Mammary epithelial cell (primary cell): ENCODE measurements at regions of chr16 and their contacts with region 1.

Region 1: GRCh38 chr16:3150346-3151218 is 15.8 kb downstream of the ZNF213 start:
- DNase-seq: peak; percentile 96
- H3K4me3 ChIP-seq: peak overlapping the region; percentile 62 to 70 (median 70)
- H3K27ac ChIP-seq: peak overlapping the region; percentile 70
- H3K4me1 ChIP-seq: peaks cover 14% of the 10 kb centered on the region
- H3K27me3 ChIP-seq: no peaks in the 10 kb centered on the region
- CTCF ChIP-seq: no peak

Region 2: GRCh38 chr16:3134564-3135417 is 15.8 kb before region 1 on chr16 and contains the start of gene ZNF213:
- CTCF ChIA-PET with region 1: no interaction called
- dilution Hi-C with region 1: no loop called
- in situ Hi-C with region 1: no loop called
- intact Hi-C with region 1: loop called (anchors 1 kb)
- DNase-seq: peak; percentile 98
- H3K4me3 ChIP-seq: peak within 1 kb of the TSS; percentile 93 to 100 (median 97)
- H3K27ac ChIP-seq: peak within 1 kb of the TSS; percentile 80
- H3K4me1 ChIP-seq: peaks cover 7% of the 10 kb centered on the region
- H3K27me3 ChIP-seq: no peaks in the 10 kb centered on the region
- CTCF ChIP-seq: no peak
- total RNA-seq, gene ZNF213: 7.7 to 10.8 TPM

Region 3: GRCh38 chr16:3171855-3172593 is 21.4 kb after region 1 on chr16:
- CTCF ChIA-PET with region 1: no interaction called
- dilution Hi-C with region 1: no loop called
- in situ Hi-C with region 1: no loop called
- intact Hi-C with region 1: loop called (anchors 1 kb)
- DNase-seq: peak; percentile 84
- H3K4me3 ChIP-seq: peak overlapping the region in 1 of 3 experiments; percentile 21
- H3K27ac ChIP-seq: no peak overlapping the region
- H3K4me1 ChIP-seq: peaks cover 16% of the 10 kb centered on the region
- H3K27me3 ChIP-seq: peaks cover 2% of the 10 kb centered on the region
- CTCF ChIP-seq: no peak

Region 4: DNA sequence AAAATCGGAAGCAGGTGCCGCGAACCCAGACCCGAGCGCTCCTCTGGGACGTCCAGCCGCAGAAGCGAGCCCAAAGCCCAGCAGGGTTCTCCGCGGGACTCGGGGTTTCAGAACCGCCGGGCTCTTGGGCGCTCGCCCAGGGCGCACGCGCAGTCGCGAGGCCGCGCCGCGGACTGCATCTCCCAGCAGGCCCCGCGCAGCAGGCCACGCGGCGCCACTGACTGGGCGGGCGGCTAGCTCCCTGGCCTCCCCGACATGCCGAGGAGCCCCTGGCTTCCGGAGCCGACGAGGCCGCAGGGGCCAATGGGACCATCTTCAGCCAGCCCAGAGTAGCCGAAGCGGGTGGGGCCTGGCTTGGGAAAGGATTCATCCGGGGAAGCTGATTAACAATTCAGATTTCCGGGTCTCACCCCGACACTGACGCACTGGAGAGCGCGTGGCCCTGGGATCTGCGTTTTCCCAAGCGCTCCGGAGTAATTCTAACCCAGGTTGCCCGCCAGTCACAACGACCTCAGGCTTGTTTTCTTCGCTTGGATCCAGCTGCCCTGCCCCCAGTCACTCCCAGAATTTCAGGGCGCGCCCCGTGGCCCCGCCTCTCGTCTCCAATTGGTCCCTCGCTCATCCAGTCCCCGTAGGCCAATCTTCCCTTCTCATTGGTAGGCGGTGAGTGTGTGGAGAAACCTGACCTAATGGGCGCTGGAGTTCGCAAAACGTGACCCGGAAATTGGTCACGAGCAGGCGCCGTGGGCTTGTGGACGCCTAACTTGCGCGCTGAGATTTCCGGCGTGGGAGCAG is 132.3 kb after region 1 on chr16 and contains the start of gene ZNF263:
- CTCF ChIA-PET with region 1: no interaction called
- dilution Hi-C with region 1: no loop called
- in situ Hi-C with region 1: no loop called
- intact Hi-C with region 1: loop called (anchors 5 kb)
- DNase-seq: peak; percentile 98
- H3K4me3 ChIP-seq: peak within 1 kb of the TSS; percentile 86 to 98 (median 91)
- H3K27ac ChIP-seq: peak within 1 kb of the TSS; percentile 96
- H3K4me1 ChIP-seq: peaks cover 12% of the 10 kb centered on the region
- H3K27me3 ChIP-seq: no peaks in the 10 kb centered on the region
- CTCF ChIP-seq: no peak
- total RNA-seq, gene ZNF263: 23.7 to 54.8 TPM